Mammary epithelial cell (primary cell): ENCODE measurements at regions of chr19 and their contacts with region 1.

Region 1: DNA sequence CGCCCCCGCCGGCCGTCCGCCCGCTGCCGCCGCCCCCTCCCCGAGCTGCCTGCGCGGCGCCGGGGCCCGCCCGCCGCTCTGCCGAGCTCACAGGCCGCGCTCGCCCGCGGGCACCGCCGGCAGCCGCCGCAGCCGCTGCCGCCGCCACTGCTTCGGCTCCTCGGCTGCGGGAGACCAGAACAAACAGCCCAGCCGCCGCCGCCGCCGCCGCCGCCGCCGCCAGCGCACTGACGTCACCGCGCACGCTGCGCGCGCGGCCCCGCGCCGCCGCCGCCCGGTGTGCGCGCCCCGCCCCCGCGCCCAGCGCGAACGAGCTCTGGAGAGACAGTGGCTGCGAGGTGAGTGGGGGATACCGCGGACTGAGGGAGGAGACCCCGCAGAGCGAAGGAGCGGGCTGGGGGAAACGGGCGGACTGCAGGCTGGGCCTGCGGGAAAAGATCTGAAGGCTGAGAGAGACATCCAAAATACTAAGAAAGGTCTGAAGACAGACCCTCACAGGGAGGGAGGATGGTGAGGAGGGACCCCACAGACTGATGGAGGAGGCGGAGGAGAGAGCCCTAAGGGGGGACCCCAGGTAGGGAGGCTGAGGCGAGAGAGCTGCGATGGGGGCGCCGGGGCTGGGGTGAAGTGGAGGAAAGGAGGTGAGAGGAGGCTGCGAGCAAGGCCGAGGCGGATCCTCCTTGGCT is at the start of gene BRD4:
- DNase-seq: peak; percentile 35
- H3K4me3 ChIP-seq: peak within 1 kb of the TSS; percentile 89 to 96 (median 94)
- H3K27ac ChIP-seq: peak within 1 kb of the TSS; percentile 86
- H3K4me1 ChIP-seq: peaks cover 9% of the 10 kb centered on the region
- H3K27me3 ChIP-seq: no peaks in the 10 kb centered on the region
- CTCF ChIP-seq: no peak
- total RNA-seq, gene BRD4: 22.2 to 113 TPM

Region 2: GRCh38 chr19:15297416-15298224 is 34.8 kb before region 1 on chr19:
- CTCF ChIA-PET with region 1: interaction called, 3 read pairs
- dilution Hi-C with region 1: loop called (anchors 5 kb)
- in situ Hi-C with region 1: no loop called
- intact Hi-C with region 1: loop called (anchors 5 kb)
- DNase-seq: peak; percentile 65
- H3K4me3 ChIP-seq: no peak overlapping the region
- H3K27ac ChIP-seq: peak overlapping the region; percentile 19
- H3K4me1 ChIP-seq: peaks cover 67% of the 10 kb centered on the region
- H3K27me3 ChIP-seq: no peaks in the 10 kb centered on the region
- CTCF ChIP-seq: peak in 1 of 2 donors; percentile 44

Region 3: GRCh38 chr19:15316498-15316897 is 16.0 kb before region 1 on chr19:
- CTCF ChIA-PET with region 1: no interaction called
- dilution Hi-C with region 1: no loop called
- in situ Hi-C with region 1: no loop called
- intact Hi-C with region 1: loop called (anchors 1 kb)
- DNase-seq: no peak
- H3K4me3 ChIP-seq: no peak overlapping the region
- H3K27ac ChIP-seq: no peak overlapping the region
- H3K4me1 ChIP-seq: peaks cover 20% of the 10 kb centered on the region
- H3K27me3 ChIP-seq: no peaks in the 10 kb centered on the region
- CTCF ChIP-seq: no peak